ENCODE measurements at regions of chr17 and their contacts with region 1.

Region 1: DNA sequence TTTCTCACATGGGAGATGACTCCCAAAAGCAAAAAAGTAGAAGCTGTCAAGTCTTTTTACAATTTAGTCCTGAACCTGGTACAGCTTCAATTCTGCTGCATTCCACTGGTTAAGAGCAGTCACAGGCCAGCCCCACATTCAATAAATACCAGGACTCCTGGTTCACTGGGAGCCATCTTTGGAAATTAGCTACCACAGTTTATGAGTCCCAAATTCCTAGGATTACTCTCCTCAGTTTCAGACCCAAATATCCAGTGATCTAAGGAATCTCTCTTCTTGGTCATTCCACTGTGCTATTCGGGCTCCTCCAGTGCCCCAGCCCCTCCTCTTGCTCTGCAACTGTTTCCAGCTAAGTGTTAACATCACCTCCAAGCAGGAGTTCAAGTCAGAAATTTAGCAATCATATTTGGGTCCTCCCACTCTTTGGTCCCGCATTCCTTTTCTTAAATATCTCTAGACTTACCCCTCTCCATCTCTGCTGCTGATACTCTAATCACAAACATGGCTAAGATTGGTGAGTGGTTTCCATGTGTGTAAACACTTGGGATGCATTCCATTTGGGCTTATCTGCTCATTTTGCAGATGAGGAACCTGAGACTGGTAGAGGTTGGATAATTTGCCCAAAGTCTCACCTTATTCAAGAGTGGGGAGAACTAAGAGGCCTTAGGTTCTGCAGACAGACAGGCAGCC is 9.6 kb upstream of the WIPF2 start:
- DNase-seq: no peak
- ATAC-seq: no peak
- H3K4me3 ChIP-seq: no peak overlapping the region
- H3K27ac ChIP-seq: no peak overlapping the region
- H3K4me1 ChIP-seq: peaks cover 0 to 6% of the 10 kb centered on the region in 2 donors
- H3K27me3 ChIP-seq: no peaks in the 10 kb centered on the region
- CTCF ChIP-seq: no peak

Region 2: DNA sequence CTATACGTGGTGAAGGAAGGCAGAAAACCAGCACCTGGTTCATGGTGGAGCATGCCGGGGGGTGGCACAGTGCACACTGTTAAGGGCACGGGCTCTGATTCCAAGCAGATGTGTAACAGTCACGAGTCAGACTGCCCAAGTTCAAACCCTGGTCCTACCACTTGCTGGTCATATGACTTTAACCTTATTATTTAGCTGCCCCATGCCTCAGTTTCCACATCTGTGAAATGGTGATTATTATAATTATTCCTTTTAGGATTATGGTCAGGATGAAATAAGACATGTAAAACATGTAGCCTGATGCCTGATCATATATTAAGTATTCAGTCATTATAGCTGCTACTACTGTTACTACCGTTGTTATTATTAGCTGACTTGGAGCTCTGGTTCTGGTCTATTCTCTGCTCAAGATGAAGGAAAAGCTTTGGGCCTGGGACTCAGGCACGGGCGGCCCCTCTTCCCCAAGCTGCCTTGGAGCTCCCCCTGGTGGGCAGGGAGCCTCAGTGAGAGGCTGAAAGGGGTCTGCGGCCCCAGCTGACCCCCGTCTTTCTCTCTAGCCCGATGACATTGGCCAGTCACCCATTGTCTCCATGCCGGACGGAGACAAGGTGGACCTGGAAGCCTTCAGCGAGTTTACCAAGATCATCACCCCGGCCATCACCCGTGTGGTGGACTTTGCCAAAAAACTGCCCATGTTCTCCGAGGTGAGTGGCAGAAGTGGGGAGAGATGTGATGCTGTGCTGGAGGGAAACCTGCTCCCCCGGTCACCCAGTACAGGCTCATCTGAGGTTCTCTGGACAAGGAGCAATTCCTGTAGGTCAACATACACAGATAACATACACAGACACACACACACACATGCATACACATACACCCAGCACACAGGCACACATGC is 123.2 kb before region 1 on chr17:
- intact Hi-C with region 1: no loop called
- DNase-seq: peak in 1 of 4 donors; percentile 67
- ATAC-seq: peak; percentile 73
- H3K4me3 ChIP-seq: no peak overlapping the region
- H3K27ac ChIP-seq: no peak overlapping the region
- H3K4me1 ChIP-seq: peaks cover 0 to 9% of the 10 kb centered on the region in 2 donors
- H3K27me3 ChIP-seq: no peaks in the 10 kb centered on the region
- CTCF ChIP-seq: peak; percentile 69 to 78

Region 3: GRCh38 chr17:40191237-40192208 is 18.0 kb before region 1 on chr17:
- intact Hi-C with region 1: no loop called
- DNase-seq: peak; percentile 64 to 90 (median 78)
- ATAC-seq: peak; percentile 93
- H3K4me3 ChIP-seq: peak overlapping the region; percentile 39 to 52
- H3K27ac ChIP-seq: peak overlapping the region in 1 of 2 donors; percentile 21
- H3K4me1 ChIP-seq: peaks cover 5 to 10% of the 10 kb centered on the region in 2 donors
- H3K27me3 ChIP-seq: peaks cover 0 to 12% of the 10 kb centered on the region in 2 donors
- CTCF ChIP-seq: peak; percentile 48 to 51

Region 4: DNA sequence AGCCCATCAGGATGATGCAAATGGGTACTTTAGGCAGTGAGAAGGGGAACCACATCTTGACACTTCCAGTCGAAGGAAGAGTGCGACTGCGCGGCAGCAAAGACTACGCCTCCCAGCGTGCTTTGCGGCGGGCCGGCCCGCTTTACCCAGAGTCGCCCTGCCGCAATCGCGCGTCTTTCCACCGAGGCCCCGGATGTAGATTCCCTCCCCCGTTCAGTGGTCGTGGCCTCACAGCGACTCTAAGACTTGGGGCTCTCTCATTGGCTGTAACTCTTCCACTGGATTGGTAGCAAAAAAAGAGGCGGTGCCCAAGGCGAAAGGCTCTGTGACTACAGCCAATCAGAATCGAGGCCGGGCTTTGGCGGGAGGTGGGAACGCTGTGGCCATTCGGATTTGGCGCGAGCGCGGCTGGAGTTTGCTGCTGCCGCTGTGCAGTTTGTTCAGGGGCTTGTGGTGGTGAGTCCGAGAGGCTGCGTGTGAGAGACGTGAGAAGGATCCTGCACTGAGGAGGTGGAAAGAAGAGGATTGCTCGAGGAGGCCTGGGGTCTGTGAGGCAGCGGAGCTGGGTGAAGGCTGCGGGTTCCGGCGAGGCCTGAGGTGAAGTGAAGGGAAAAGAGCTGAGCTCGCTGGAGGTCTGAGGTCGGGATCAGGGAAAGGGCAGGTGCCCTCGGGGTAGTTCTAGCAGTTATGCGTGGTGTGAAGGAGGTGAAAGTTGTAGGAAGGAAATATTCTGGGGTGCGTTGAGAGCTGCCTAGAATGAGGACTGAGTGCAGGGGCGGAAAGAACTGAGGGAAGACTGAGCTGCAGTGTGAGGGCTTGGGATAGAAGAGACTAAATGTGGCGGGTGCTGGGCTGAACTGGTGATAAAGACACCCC is 78.2 kb after region 1 on chr17 and contains the start of gene CDC6:
- intact Hi-C with region 1: loop called in 1 of 2 experiments (anchors 5 kb)
- DNase-seq: peak; percentile 97 to 99 (median 98)
- ATAC-seq: peak; percentile 93
- H3K4me3 ChIP-seq: peak within 1 kb of the TSS; percentile 54 to 69
- H3K27ac ChIP-seq: peak within 1 kb of the TSS in 1 of 2 donors; percentile 18
- H3K4me1 ChIP-seq: peaks cover 9 to 38% of the 10 kb centered on the region in 2 donors
- H3K27me3 ChIP-seq: no peaks in the 10 kb centered on the region
- CTCF ChIP-seq: no peak
- polyA plus RNA-seq, gene CDC6: 15.6 to 25.9 (median 20.3) TPM